Activated CD4-positive, alpha-beta T cell treated with anti-CD3 and anti-CD28 coated beads, Interleukin-2, amount 10 ng/mL, durations not matched to agents 7 days and 5 days (primary cell): ENCODE measurements at regions of chr2 and their contacts with region 1.

Region 1: GRCh38 chr2:134233728-134234136 is 20.1 kb upstream of the MGAT5 start:
- DNase-seq: no peak
- H3K4me3 Mint-ChIP-seq: peak overlapping the region; percentile 40
- H3K27ac Mint-ChIP-seq: peak overlapping the region; percentile 87
- H3K4me1 Mint-ChIP-seq: peaks cover 71% of the 10 kb centered on the region
- H3K27me3 Mint-ChIP-seq: no peaks in the 10 kb centered on the region

Region 2: DNA sequence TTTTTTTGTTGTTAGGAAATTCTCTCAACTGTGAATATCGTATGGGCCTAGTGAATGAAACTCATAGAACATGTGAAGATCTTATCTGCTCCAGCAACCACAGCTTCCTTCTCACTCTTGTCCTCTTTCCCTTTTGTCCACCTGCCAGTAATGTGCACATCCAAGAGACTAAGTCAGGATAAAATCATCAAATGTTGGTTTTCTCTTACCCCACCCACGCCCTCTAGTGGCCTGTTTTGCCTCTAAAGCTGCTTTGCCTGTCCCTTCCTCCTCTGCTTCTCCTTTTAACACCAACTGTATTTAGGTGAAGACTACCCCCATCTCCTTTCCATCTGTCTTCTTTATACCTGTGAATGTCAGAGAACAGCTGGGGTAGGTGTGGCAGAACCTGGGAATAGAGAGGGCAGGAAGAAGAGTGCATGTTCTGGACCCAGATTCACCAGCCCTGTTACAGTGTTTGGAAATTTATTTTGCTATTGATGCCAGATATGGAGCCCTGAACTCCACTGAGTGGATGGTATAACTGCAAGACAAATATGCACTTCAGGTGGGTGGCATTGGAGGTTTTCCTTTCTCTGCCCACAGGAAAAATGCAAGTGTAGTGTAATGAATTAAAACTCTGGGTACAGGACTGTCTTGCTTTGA is 11.7 kb after region 1 on chr2:
- CTCF ChIA-PET with region 1: interaction called, 10 read pairs
- POLR2A ChIA-PET with region 1: no interaction called
- DNase-seq: peak; percentile 85
- H3K4me3 Mint-ChIP-seq: no peak overlapping the region
- H3K27ac Mint-ChIP-seq: peak overlapping the region; percentile 33
- H3K4me1 Mint-ChIP-seq: peaks cover 70% of the 10 kb centered on the region
- H3K27me3 Mint-ChIP-seq: no peaks in the 10 kb centered on the region

Region 3: GRCh38 chr2:134258684-134259388 is 25.1 kb after region 1 on chr2:
- CTCF ChIA-PET with region 1: no interaction called
- POLR2A ChIA-PET with region 1: no interaction called
- DNase-seq: peak; percentile 83
- H3K4me3 Mint-ChIP-seq: peak overlapping the region; percentile 40
- H3K27ac Mint-ChIP-seq: peak overlapping the region; percentile 87
- H3K4me1 Mint-ChIP-seq: peaks cover 85% of the 10 kb centered on the region
- H3K27me3 Mint-ChIP-seq: no peaks in the 10 kb centered on the region